ENCODE measurements at regions of chr20 and their contacts with region 1.

Region 1: GRCh38 chr20:48722737-48723191 is 105.0 kb downstream of the PREX1 start:
- DNase-seq: peak; percentile 41 to 84 (median 81)
- H3K4me3 ChIP-seq: peak overlapping the region in 3 of 7 experiments; percentile 6 to 19 (median 16)
- H3K27ac ChIP-seq: peak overlapping the region; percentile 69 to 85
- H3K4me1 ChIP-seq: peaks cover 14 to 76% (median 57%) of the 10 kb centered on the region in 4 experiments
- H3K27me3 ChIP-seq: no peaks in the 10 kb centered on the region

Region 2: DNA sequence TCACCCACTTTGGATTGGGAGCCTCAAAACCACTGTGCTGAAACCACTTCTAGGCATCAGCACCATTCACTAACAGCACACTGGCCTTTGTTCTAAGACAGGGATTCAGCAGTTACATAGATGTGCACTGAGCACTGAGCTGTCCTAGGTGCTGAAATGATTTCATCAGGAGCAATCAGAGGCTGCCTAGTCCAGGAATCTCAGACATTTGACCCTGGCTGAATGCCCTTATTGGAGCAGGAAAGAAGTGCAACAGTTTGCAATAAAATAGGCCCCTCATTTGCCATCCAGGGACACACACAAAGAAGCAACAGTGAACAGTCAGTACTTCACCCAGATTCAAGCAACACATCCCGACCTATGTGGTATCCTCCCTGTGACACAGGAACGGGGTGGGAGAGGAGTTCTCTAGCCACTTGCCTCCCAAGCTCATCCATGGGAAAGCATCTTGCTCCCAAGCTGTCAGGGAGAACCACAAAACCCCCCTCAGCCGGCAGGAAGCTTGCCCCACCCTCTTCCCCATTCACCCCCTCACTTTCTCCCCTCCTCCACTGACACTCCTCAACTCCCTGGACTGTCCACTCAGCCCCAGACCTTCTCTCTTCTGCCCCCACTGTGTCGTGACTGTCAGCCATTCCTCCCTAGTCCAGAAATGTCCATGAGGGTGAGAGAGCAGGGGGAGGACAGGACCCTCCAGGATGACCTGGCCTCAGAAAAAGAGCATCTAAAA is 199.4 kb before region 1 on chr20:
- CTCF ChIA-PET with region 1: no interaction called
- POLR2A ChIA-PET with region 1: no interaction called
- DNase-seq: peak; percentile 39 to 61 (median 52)
- H3K4me3 ChIP-seq: no peak overlapping the region
- H3K27ac ChIP-seq: no peak overlapping the region
- H3K4me1 ChIP-seq: no peaks in the 10 kb centered on the region
- H3K27me3 ChIP-seq: no peaks in the 10 kb centered on the region

Region 3: GRCh38 chr20:48609491-48609978 is 113.2 kb before region 1 on chr20:
- CTCF ChIA-PET with region 1: no interaction called
- POLR2A ChIA-PET with region 1: no interaction called
- DNase-seq: no peak
- H3K4me3 ChIP-seq: no peak overlapping the region
- H3K27ac ChIP-seq: no peak overlapping the region
- H3K4me1 ChIP-seq: no peaks in the 10 kb centered on the region
- H3K27me3 ChIP-seq: peaks cover 0 to 8% (median 4%) of the 10 kb centered on the region in 5 experiments

Region 4: DNA sequence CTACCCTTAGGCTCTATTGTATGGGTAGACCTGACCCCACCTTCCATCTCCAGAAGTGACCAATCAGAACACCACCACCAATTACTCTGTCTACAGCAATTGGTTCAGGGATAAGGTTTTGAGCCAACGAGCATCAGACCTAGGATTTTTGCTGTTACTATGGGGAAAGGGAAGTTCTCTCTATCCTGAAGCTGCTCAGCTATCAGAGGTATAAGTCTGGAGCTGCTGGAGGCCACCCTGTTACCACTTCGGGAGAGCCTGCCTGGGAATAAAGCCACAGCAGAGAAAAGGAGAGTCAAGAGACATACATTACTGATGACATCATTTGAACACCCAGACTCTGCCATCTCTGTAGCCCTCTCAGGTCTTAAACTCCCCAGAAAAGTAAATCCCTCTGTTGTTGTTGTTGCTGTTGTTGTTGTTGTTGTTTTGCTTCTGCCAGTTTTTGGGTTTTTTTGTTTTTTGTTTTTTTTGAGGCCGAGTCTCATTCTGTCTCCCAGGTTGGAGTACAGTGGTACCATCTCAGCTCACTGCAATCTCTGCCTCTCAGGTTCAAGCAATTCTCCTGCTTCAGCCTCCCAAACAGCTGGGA is 10.6 kb after region 1 on chr20:
- CTCF ChIA-PET with region 1: interaction called, 17 read pairs
- POLR2A ChIA-PET with region 1: no interaction called
- DNase-seq: peak in 2 of 3 donors; percentile 51 to 52
- H3K4me3 ChIP-seq: no peak overlapping the region
- H3K27ac ChIP-seq: no peak overlapping the region
- H3K4me1 ChIP-seq: peaks cover 16 to 71% (median 54%) of the 10 kb centered on the region in 4 experiments
- H3K27me3 ChIP-seq: no peaks in the 10 kb centered on the region

Region 5: DNA sequence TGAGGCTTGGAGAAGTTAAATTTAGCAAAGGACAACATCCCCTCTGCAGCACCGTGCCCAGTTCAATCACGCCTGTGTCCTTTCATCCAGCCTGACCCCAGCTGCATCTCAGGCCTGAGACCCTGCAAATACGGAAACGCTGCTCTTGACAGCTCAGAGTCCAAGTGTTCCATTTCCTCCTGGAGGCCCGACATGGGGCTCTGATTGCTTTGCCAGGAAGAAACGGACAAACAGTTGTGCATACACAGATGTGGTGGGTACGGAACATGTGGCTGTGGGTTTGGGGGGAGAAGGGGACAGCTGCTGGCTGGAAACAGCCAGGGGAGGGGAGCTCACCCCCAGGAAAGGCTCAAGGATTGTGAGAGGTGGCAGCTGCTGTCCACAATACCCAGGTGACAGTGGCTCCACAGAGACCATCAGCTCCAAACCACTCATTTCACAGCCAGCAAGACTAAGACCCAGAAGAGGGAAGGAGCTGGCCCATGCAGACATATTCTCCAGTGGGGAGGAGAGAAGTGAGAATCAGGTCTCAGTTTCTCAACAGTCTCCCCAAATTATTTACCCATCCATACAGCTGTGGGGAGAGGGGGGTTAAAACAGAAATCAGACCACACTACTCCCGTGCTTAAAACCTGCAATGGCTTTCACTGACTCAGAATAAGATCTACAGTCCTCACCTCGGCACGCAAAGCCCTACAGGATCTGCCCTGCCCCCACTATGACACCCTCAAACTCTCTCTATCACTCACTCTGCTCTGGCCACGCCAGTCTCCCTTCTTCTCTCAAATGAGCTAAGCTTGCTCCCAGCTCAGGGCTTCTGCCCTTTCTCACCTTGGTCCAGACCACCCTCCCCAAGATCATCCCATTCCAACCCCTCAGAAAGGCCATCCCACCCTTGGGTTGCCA is 15.9 kb after region 1 on chr20:
- CTCF ChIA-PET with region 1: interaction called, 17 read pairs
- POLR2A ChIA-PET with region 1: no interaction called
- DNase-seq: peak in 2 of 3 donors; percentile 63 to 64
- H3K4me3 ChIP-seq: peak overlapping the region in 2 of 7 experiments; percentile 25 to 30
- H3K27ac ChIP-seq: no peak overlapping the region
- H3K4me1 ChIP-seq: peaks cover 22 to 66% (median 65%) of the 10 kb centered on the region in 4 experiments
- H3K27me3 ChIP-seq: no peaks in the 10 kb centered on the region